ENCODE measurements at regions of chr1 and their contacts with region 1.

Region 1: GRCh38 chr1:184222652-184223052 is 164.2 kb upstream of the C1orf21 start:
- DNase-seq: peak; percentile 40 to 47
- H3K4me3 ChIP-seq: no peak overlapping the region
- H3K27ac ChIP-seq: no peak overlapping the region
- H3K4me1 ChIP-seq: no peaks in the 10 kb centered on the region
- H3K27me3 ChIP-seq: no peaks in the 10 kb centered on the region
- CTCF ChIP-seq: peak; percentile 92

Region 2: GRCh38 chr1:183655562-183656075 is 567.0 kb before region 1 on chr1:
- CTCF ChIA-PET with region 1: no interaction called
- POLR2A ChIA-PET with region 1: no interaction called
- intact Hi-C with region 1: loop called (anchors 2 kb)
- DNase-seq: peak; percentile 54 to 68
- H3K4me3 ChIP-seq: no peak overlapping the region
- H3K27ac ChIP-seq: no peak overlapping the region
- H3K4me1 ChIP-seq: no peaks in the 10 kb centered on the region
- H3K27me3 ChIP-seq: no peaks in the 10 kb centered on the region
- CTCF ChIP-seq: peak; percentile 94

Region 3: GRCh38 chr1:184075055-184076029 is 147.3 kb before region 1 on chr1:
- CTCF ChIA-PET with region 1: interaction called, 4 read pairs
- POLR2A ChIA-PET with region 1: no interaction called
- intact Hi-C with region 1: loop called (anchors 1 kb)
- DNase-seq: peak; percentile 15 to 43
- H3K4me3 ChIP-seq: no peak overlapping the region
- H3K27ac ChIP-seq: no peak overlapping the region
- H3K4me1 ChIP-seq: no peaks in the 10 kb centered on the region
- H3K27me3 ChIP-seq: no peaks in the 10 kb centered on the region
- CTCF ChIP-seq: peak; percentile 85

Region 4: GRCh38 chr1:184664042-184664655 is 441.5 kb after region 1 on chr1:
- CTCF ChIA-PET with region 1: interaction called, 3 read pairs
- POLR2A ChIA-PET with region 1: no interaction called
- intact Hi-C with region 1: loop called (anchors 5 kb)
- DNase-seq: peak in 1 of 2 experiments; percentile 49
- H3K4me3 ChIP-seq: no peak overlapping the region
- H3K27ac ChIP-seq: no peak overlapping the region
- H3K4me1 ChIP-seq: no peaks in the 10 kb centered on the region
- H3K27me3 ChIP-seq: no peaks in the 10 kb centered on the region
- CTCF ChIP-seq: peak; percentile 80

Region 5: GRCh38 chr1:184691719-184692324 is 469.2 kb after region 1 on chr1:
- CTCF ChIA-PET with region 1: no interaction called
- POLR2A ChIA-PET with region 1: no interaction called
- intact Hi-C with region 1: loop called (anchors 1 kb)
- DNase-seq: peak in 1 of 2 experiments; percentile 29
- H3K4me3 ChIP-seq: no peak overlapping the region
- H3K27ac ChIP-seq: no peak overlapping the region
- H3K4me1 ChIP-seq: no peaks in the 10 kb centered on the region
- H3K27me3 ChIP-seq: no peaks in the 10 kb centered on the region
- CTCF ChIP-seq: peak; percentile 81

Region 6: DNA sequence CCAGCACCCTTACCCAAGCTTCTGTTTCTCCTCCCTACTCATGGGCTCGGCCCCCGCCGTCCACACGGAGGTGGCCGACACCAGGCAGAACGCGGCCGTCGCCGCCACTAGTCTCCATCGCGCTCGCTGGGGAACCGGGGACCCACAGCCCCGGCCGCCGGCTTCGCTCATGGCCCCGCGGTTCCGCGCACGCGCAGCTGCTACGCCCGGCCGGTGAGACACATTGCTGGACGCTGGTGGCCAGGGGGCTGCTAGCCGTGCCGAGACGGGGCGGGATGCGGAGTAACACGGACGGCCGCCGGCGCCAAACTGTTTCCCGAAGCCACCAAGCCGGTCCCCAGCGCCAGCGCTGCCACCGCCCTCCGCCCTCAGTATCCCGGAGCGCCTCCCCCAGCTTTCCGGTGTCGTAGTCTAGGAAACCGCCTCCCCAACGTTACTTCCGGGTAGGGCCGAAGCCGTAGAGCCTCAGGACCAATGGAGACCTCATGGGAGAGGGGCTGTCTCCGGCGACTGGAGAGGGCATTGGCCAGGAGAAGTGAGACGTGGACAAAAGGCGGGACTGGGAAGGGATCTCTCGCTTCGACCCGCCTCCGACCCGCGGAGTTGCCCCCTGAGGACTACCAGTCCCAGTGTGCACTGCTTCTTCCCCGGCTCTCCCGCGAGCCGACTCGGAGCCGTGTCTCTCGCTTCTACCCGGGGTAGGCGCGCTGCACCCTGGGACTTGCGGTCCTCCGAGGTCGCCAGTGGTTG is 532.0 kb after region 1 on chr1 and contains the start of gene EDEM3:
- CTCF ChIA-PET with region 1: no interaction called
- POLR2A ChIA-PET with region 1: interaction called, 14 read pairs
- intact Hi-C with region 1: no loop called
- DNase-seq: peak; percentile 98
- H3K4me3 ChIP-seq: peak within 1 kb of the TSS; percentile 98
- H3K27ac ChIP-seq: peak within 1 kb of the TSS; percentile 52
- H3K4me1 ChIP-seq: peaks cover 25% of the 10 kb centered on the region
- H3K27me3 ChIP-seq: no peaks in the 10 kb centered on the region
- CTCF ChIP-seq: no peak
- total RNA-seq, gene EDEM3: 10.3 and 14.5 TPM in 2 replicates